H1 (cell line): ENCODE measurements at regions of chr11 and their contacts with region 1.

Region 1: DNA sequence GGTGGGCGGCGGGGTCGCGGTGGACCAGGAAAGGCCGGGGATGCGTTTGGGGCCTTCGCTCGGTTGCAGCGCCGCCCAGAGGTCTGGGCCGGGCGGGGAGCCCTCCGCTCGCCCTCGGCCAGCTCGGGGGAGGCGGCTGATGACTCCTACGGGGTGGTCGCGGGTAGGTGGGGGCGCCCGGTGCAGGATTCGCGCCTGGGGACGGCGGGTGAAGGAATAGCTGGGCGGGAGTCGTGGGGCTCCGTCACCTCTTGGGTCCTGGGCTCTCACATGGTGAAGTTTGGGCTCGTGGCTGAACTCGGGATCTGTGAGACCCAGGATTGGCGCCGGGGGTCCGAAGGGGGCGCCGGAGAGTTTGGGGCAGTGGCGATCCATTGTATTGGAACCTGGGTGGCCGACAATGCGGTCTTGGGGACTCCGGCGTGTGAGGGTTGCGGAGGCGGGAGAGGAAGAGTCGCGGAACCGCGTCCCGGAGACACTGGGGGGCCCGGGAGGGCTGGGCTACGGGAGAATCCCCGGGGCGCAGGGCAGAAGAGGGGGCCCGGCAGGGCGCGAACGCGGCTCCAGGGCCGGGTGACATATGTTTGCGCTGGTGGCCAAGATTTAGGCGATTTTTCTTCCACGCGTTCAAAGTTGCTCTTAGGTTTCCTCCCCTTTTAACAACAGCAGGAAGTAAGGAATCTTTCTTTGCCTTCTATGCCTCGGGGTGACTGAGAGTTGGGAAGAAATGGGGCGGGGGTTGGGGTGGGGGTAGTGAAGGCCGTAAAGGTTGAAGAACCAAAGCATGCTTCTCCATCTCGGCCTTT is 935 bp downstream of the QSER1 start:
- DNase-seq: peak in 1 of 2 experiments; percentile 80
- H3K4me3 ChIP-seq: peak overlapping the region; percentile 84 to 98 (median 93)
- H3K27ac ChIP-seq: peak overlapping the region; percentile 97
- H3K4me1 ChIP-seq: peaks cover 2 to 25% (median 7%) of the 10 kb centered on the region in 4 experiments
- H3K27me3 ChIP-seq: no peaks in the 10 kb centered on the region
- CTCF ChIP-seq: peak; percentile 32 to 51 (median 36); a peak in 3 of 4 replicates
- EP300 ChIP-seq: no peak
- POLR2A ChIP-seq: peak in 1 of 2 experiments; percentile 36; a peak in 1 of 3 replicates
- RAD21 ChIP-seq: peak; percentile 17 to 42; a peak in 3 of 4 replicates

Region 2: GRCh38 chr11:32905028-32905667 is 11.6 kb after region 1 on chr11:
- CTCF ChIA-PET with region 1: interaction called, 8 read pairs
- POLR2A ChIA-PET with region 1: interaction called, 35 read pairs
- DNase-seq: no peak
- H3K4me3 ChIP-seq: no peak overlapping the region
- H3K27ac ChIP-seq: no peak overlapping the region
- H3K4me1 ChIP-seq: peaks cover 0 to 7% (median 5%) of the 10 kb centered on the region in 4 experiments; a peak in 6 of 7 replicates
- H3K27me3 ChIP-seq: no peaks in the 10 kb centered on the region
- CTCF ChIP-seq: no peak
- EP300 ChIP-seq: no peak
- POLR2A ChIP-seq: no peak
- RAD21 ChIP-seq: no peak

Region 3: DNA sequence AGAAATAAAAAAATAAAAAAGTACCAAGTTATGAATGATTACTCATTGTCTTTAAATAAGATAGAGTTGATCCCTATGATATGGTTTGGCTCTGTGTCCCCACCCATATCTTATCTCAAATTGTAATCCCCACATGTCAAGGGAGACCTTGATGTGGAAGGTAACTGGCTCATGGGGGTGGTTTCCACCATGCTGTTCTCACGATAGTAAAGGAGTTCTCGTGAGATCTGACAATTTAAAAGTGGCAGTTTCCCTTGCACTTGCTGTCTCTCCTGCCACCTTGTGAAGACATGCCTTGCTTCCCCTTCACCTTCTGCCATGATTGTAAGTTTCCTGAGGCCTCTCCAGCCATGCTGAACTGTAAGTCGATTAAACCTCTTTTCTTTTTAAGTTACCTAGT is 17.9 kb after region 1 on chr11:
- CTCF ChIA-PET with region 1: interaction called, 3 read pairs
- POLR2A ChIA-PET with region 1: interaction called, 35 read pairs
- DNase-seq: no peak
- H3K4me3 ChIP-seq: no peak overlapping the region
- H3K27ac ChIP-seq: no peak overlapping the region; the same call in 1 of the 2 replicates
- H3K4me1 ChIP-seq: no peaks in the 10 kb centered on the region
- H3K27me3 ChIP-seq: no peaks in the 10 kb centered on the region
- CTCF ChIP-seq: no peak
- EP300 ChIP-seq: no peak
- POLR2A ChIP-seq: no peak
- RAD21 ChIP-seq: no peak

Region 4: GRCh38 chr11:33172996-33173395 is 279.4 kb after region 1 on chr11:
- CTCF ChIA-PET with region 1: no interaction called
- POLR2A ChIA-PET with region 1: no interaction called
- DNase-seq: no peak
- H3K4me3 ChIP-seq: no peak overlapping the region
- H3K27ac ChIP-seq: no peak overlapping the region
- H3K4me1 ChIP-seq: peaks cover 0 to 7% (median 2%) of the 10 kb centered on the region in 4 experiments; a peak in 4 of 7 replicates
- H3K27me3 ChIP-seq: no peaks in the 10 kb centered on the region
- CTCF ChIP-seq: no peak
- EP300 ChIP-seq: no peak
- POLR2A ChIP-seq: no peak
- RAD21 ChIP-seq: no peak; a peak in 1 of 4 replicates